ACHN (cell line): ENCODE measurements at regions of chr16 and their contacts with region 1.

Region 1: DNA sequence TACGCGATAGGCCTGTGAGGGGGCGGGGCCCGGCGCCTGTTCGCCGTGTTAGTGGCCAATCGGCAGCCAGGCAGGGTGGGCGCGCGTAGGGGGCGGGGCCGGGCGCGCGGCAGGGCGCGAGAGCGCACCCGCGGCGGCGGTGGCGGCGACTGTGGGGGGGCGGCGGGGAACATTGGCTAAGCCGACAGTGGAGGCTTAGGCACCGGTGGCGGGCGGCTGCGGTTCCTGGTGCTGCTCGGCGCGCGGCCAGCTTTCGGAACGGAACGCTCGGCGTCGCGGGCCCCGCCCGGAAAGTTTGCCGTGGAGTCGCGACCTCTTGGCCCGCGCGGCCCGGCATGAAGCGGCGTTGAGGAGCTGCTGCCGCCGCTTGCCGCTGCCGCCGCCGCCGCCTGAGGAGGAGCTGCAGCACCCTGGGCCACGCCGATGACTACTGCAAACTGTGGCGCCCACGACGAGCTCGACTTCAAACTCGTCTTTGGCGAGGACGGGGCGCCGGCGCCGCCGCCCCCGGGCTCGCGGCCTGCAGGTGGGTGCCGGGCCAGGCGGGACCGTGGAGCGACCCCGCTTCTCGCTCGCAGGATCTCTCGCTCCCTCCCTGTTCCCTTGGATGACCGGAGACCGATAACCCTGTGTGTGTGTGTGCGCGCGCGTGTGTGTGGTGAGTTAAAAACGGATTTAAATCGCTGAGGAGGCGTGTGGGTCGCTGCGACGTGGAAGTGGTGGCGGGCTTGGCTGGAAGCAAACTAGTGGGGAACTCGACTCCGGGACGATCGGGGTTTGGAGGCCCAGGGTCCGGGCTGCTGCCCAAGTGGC is at the start of gene NFATC3:
- DNase-seq: peak; percentile 98

Region 2: GRCh38 chr16:67969254-67970039 is 116.0 kb before region 1 on chr16:
- in situ Hi-C with region 1: no loop called
- DNase-seq: peak; percentile 28

Region 3: DNA sequence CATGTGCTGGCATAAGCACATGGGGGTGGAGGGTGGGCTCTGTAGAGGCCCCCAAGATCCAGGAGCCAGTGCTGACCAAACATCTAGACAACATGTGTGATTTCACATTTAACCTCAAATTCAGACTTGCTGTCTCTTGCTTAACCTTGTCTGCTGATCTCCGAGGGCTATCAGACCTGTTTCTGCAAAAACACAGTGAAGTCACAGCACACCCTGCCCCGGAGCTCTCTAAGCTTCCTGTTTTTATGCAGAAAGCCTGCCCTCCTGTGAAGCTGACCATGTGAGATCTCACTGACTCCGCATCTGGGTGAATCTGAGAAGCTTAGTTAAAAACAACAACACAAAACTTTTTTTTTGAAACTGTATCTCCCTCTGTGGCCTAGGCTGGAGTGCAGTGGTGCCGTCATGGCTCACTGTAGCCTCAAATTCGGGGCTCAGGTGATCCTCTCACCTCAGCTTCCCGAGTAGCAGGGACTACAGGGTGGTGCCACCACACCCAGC is 79.6 kb before region 1 on chr16:
- in situ Hi-C with region 1: no loop called
- DNase-seq: no peak

Region 4: DNA sequence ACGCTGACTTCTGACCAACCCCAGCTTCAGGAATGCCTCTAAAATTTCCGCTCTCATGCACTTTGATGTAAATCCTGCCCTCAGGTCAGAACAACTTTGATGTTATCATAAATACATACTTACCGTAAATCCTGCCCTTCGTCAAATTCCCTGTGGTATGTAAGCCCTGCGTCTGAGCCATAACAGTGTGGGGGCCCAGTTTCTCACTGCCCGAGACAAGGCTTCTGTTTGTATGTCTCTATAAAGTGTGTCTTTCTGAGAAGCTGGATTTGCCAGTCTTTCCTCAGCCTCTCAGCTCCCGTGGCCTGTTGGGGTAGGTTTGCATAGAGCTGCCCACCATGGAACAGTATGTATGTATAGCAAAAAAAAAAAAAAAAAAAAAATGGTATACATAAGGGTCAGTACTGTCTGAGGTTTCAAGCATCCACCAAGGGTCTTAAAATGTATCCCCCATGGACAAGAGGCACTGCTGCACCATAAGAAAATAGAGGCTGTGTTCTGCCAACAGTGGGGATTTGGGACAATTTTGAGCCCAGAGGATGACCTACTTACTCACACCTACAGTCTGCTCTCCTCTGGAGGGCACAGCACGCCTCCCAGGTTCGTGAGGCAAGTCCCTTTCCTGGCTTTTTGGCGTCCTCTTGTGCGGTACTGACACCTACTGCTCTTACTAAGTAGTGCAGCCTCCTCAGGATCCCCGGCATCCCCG is 242.8 kb after region 1 on chr16:
- in situ Hi-C with region 1: loop called (anchors 25 kb)
- DNase-seq: peak; percentile 89